ENCODE measurements at regions of chr3 and their contacts with region 1.

Region 1: DNA sequence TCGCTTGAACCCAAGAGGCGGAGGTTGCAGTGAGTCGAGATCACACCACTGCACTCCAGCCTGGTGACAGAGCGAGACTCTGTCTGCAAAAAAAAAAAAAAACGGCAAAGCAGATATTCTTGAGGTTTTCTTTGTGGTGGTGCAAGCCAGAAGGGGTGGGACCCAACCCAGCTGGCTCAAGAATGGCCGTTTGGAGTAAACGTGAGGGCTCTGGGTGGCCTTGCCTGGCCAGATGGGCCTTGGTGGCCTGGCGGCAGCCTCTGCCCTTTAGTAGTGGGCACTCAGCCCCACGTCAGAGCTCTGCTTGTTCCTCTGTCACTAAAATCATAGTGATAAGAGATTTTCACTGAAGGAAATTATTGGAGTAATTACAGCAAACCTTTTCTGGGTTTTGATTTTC is 50.5 kb downstream of the ATP1B3 start:
- DNase-seq: no peak
- ATAC-seq: peak in 2 of 8 donors; percentile 17 to 40
- H3K4me3 ChIP-seq: no peak overlapping the region
- H3K27ac ChIP-seq: no peak overlapping the region
- H3K4me1 ChIP-seq: no peaks in the 10 kb centered on the region
- H3K27me3 ChIP-seq: no peaks in the 10 kb centered on the region
- CTCF ChIP-seq: no peak

Region 2: GRCh38 chr3:141849056-141849815 is 77.7 kb before region 1 on chr3:
- intact Hi-C with region 1: loop called in 1 of 10 experiments (anchors 2 kb)
- DNase-seq: no peak
- ATAC-seq: no peak
- H3K4me3 ChIP-seq: no peak overlapping the region
- H3K27ac ChIP-seq: peak overlapping the region in 1 of 10 donors; percentile 1
- H3K4me1 ChIP-seq: peaks cover 0 to 47% (median 12%) of the 10 kb centered on the region in 9 donors
- H3K27me3 ChIP-seq: no peaks in the 10 kb centered on the region
- CTCF ChIP-seq: no peak

Region 3: GRCh38 chr3:142028243-142028777 is 101.4 kb after region 1 on chr3:
- intact Hi-C with region 1: no loop called
- DNase-seq: peak in 1 of 2 donors; percentile 58
- ATAC-seq: peak in 7 of 8 donors; percentile 67 to 89 (median 83)
- H3K4me3 ChIP-seq: peak overlapping the region; percentile 11 to 61 (median 54)
- H3K27ac ChIP-seq: peak overlapping the region in 8 of 10 donors; percentile 5 to 73 (median 44)
- H3K4me1 ChIP-seq: peaks cover 0 to 35% (median 22%) of the 10 kb centered on the region in 9 donors
- H3K27me3 ChIP-seq: no peaks in the 10 kb centered on the region
- CTCF ChIP-seq: peak in 1 of 9 donors; percentile 20

Region 4: DNA sequence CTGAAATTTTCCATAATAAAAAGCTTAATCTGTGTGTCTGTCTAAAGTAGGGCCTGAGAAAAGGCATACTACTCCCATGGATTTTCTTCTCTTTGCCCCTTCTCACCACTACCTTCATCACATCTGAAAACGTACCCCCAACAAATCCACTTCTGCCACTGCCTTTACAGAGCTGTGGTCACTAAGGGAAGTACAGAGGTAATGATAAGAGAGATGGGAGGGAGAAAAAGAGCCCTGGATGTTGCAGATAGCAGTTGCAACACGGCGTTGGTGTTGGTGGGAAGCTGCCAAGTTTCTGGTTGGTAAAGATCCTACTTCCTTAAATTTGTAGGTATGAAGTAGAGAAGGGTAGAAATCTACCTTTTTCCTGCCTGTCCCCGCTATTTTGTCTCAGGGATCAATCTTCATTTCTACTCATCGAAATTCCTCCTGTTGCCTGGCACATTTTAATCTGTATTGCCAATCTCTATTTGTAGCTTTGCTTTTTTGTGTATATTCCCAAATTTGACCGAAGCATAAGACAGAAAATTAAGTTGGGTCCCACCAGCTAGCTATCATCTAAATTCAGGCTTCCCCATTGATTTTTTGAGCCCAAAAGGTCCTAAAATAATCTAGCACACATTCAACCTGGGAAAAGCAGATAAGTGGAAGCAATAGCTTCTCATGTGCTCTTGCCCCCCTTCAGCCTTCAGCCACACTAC is 119.5 kb after region 1 on chr3:
- intact Hi-C with region 1: no loop called
- DNase-seq: no peak
- ATAC-seq: no peak
- H3K4me3 ChIP-seq: no peak overlapping the region
- H3K27ac ChIP-seq: no peak overlapping the region
- H3K4me1 ChIP-seq: no peaks in the 10 kb centered on the region
- H3K27me3 ChIP-seq: no peaks in the 10 kb centered on the region
- CTCF ChIP-seq: no peak

Measured in heart right ventricle (tissue), 16 donors.